Panc1 (cell line): ENCODE measurements at regions of chr10 and their contacts with region 1.

Region 1: GRCh38 chr10:92689663-92690210 is at the start of gene HHEX:
- DNase-seq: no peak
- ATAC-seq: peak; percentile 93
- H3K4me3 ChIP-seq: peak within 1 kb of the TSS; percentile 66 to 71
- H3K27ac ChIP-seq: peak within 1 kb of the TSS; percentile 81
- H3K4me1 ChIP-seq: peaks cover 8% of the 10 kb centered on the region; the same call in 1 of the 2 replicates
- H3K27me3 ChIP-seq: no peaks in the 10 kb centered on the region
- CTCF ChIP-seq: no peak
- total RNA-seq, gene HHEX: 10.1 TPM

Region 2: DNA sequence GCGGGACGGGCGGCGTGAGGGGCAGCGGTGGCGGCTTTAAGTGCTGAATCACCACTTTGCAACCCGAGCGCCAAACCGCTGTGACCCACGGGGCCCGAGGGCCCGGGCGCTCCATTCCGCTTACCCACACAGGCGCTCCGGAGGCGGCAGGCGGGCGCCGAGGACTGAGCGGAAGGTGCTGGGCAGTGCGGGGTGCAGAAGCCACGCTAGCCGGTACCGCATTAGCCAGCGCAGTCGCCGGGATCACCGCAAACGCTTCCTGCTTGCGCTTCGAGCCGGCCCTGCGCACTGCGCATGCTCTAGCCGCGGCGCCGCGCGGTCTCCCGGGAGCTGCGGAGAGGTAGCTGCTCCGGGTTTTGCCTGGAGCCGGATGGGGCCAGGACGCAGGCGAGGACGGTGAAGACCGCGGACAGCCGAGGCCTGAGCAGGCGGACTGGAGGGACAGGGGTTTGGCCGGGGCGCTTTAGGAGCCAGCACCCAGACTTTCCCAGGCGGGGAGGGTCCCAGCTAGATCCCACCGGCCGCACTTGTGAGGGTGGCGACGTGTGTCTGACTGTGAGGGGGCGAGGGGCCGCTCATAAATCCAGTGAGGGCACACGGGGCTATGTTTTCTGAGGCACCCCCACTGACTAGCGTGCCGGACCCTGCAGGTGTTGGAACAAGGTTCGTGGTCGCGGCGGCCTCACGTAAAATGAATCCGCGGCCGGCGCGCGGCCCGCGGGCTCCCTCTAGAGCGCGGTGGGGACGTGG is 115.8 kb before region 1 on chr10 and contains the start of gene IDE:
- CTCF ChIA-PET with region 1: no interaction called
- POLR2A ChIA-PET with region 1: no interaction called
- in situ Hi-C with region 1: no loop called
- intact Hi-C with region 1: no loop called
- DNase-seq: no peak
- ATAC-seq: peak; percentile 90
- H3K4me3 ChIP-seq: peak within 1 kb of the TSS; percentile 81 to 93
- H3K27ac ChIP-seq: peak within 1 kb of the TSS; percentile 91
- H3K4me1 ChIP-seq: peaks cover 20% of the 10 kb centered on the region
- H3K27me3 ChIP-seq: no peaks in the 10 kb centered on the region
- CTCF ChIP-seq: peak; percentile 99
- total RNA-seq, gene IDE: 79.0 TPM

Region 3: DNA sequence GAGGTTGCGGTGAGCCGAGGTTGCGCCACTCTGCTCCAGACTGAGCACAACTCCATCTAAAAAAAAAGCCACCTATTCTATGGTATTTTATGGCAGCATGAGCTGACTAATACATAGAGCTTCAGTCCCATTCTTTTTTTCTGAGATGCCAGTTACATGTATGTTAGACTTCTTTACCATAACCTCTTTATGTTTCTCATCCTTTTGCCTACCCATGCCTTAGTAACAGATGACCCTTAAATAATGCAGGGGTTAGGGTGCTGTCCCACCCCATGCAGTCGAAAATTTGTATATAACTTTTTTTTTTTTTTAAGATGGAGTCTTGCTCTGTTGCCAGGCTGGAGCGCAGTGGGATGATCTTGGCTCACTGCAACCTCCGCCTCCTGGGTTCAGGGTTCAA is 22.7 kb before region 1 on chr10:
- CTCF ChIA-PET with region 1: no interaction called
- POLR2A ChIA-PET with region 1: interaction called, 11 read pairs
- in situ Hi-C with region 1: no loop called
- intact Hi-C with region 1: no loop called
- DNase-seq: no peak
- ATAC-seq: no peak
- H3K4me3 ChIP-seq: no peak overlapping the region
- H3K27ac ChIP-seq: no peak overlapping the region
- H3K4me1 ChIP-seq: no peaks in the 10 kb centered on the region
- H3K27me3 ChIP-seq: no peaks in the 10 kb centered on the region
- CTCF ChIP-seq: no peak

Region 4: GRCh38 chr10:92699518-92700381 is 10.0 kb after region 1 on chr10:
- CTCF ChIA-PET with region 1: no interaction called
- POLR2A ChIA-PET with region 1: interaction called, 13 read pairs
- in situ Hi-C with region 1: no loop called
- intact Hi-C with region 1: no loop called
- DNase-seq: no peak
- ATAC-seq: peak; percentile 75
- H3K4me3 ChIP-seq: peak overlapping the region; percentile 34 to 65
- H3K27ac ChIP-seq: peak overlapping the region; percentile 63
- H3K4me1 ChIP-seq: peaks cover 10% of the 10 kb centered on the region
- H3K27me3 ChIP-seq: no peaks in the 10 kb centered on the region
- CTCF ChIP-seq: no peak

Region 5: GRCh38 chr10:92712016-92712889 is 22.5 kb after region 1 on chr10:
- CTCF ChIA-PET with region 1: interaction called, 12 read pairs
- POLR2A ChIA-PET with region 1: no interaction called
- in situ Hi-C with region 1: no loop called
- intact Hi-C with region 1: no loop called
- DNase-seq: no peak
- ATAC-seq: no peak
- H3K4me3 ChIP-seq: no peak overlapping the region
- H3K27ac ChIP-seq: no peak overlapping the region
- H3K4me1 ChIP-seq: no peaks in the 10 kb centered on the region
- H3K27me3 ChIP-seq: no peaks in the 10 kb centered on the region; the same call in 1 of the 2 replicates
- CTCF ChIP-seq: no peak

Region 6: GRCh38 chr10:92886334-92886961 is 196.7 kb after region 1 on chr10:
- CTCF ChIA-PET with region 1: interaction called, 13 read pairs
- POLR2A ChIA-PET with region 1: no interaction called
- in situ Hi-C with region 1: no loop called
- intact Hi-C with region 1: no loop called
- DNase-seq: no peak
- ATAC-seq: peak; percentile 65
- H3K4me3 ChIP-seq: no peak overlapping the region
- H3K27ac ChIP-seq: 0 out of 2 replicates have a peak overlapping the region, but pooled peaks have one; percentile 12
- H3K4me1 ChIP-seq: peaks cover 14% of the 10 kb centered on the region
- H3K27me3 ChIP-seq: no peaks in the 10 kb centered on the region
- CTCF ChIP-seq: no peak